Activated CD8-positive, alpha-beta T cell treated with anti-CD3 and anti-CD28 coated beads for 36 hours (primary cell): ENCODE measurements at regions of chr14 and their contacts with region 1.

Region 1: DNA sequence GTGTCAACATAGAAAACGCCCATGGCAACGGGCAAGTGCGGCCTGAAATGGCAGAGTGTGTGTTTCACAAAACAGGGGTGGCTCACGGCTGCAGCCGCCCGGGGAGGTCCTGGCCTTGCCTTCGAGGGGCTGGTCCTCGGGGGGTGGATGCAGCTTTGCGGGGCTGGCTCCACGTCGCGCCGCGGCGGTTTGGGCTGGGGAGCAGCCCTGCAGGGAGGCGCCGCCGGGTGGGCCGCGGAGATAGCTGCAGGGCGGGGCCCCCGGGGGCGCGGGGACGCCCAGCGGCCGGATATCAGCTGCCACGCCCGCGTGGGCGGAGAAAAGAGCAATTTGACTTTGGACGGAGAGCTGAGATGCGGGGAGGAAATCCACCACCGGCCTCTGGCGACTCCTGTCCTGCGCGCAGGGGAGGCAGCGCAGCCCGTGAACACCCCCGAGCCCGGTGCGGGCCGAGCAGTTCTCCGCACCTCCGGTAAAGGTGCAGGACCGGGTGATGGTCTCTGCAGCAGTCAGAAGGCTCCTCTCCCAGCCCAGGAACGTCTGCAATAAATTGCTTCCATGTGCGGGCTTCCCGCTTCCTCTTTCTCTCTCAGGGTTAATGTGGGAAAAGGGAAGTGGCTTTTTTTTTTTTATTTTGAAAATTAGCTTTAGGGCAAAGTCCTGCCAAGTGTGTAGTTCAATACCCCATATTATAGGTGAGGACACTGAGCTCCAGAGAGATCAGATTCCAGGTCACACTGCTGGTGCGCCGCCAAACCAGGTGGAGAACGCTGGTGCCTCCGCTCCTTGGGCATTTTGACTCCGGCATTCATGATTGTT is 110.5 kb downstream of the ARF6 start:
- DNase-seq: peak; percentile 92
- ATAC-seq: peak; percentile 10
- H3K4me3 Mint-ChIP-seq: peak overlapping the region; percentile 72
- H3K27ac Mint-ChIP-seq: peak overlapping the region; percentile 94
- H3K4me1 Mint-ChIP-seq: peaks cover 35% of the 10 kb centered on the region
- H3K27me3 Mint-ChIP-seq: no peaks in the 10 kb centered on the region
- CTCF ChIP-seq: no peak

Region 2: GRCh38 chr14:49774106-49774505 is 229.3 kb before region 1 on chr14:
- CTCF ChIA-PET with region 1: no interaction called
- POLR2A ChIA-PET with region 1: no interaction called
- intact Hi-C with region 1: no loop called
- DNase-seq: no peak
- ATAC-seq: no peak
- H3K4me3 Mint-ChIP-seq: no peak overlapping the region
- H3K27ac Mint-ChIP-seq: no peak overlapping the region
- H3K4me1 Mint-ChIP-seq: peaks cover 28% of the 10 kb centered on the region
- H3K27me3 Mint-ChIP-seq: no peaks in the 10 kb centered on the region
- CTCF ChIP-seq: no peak

Region 3: DNA sequence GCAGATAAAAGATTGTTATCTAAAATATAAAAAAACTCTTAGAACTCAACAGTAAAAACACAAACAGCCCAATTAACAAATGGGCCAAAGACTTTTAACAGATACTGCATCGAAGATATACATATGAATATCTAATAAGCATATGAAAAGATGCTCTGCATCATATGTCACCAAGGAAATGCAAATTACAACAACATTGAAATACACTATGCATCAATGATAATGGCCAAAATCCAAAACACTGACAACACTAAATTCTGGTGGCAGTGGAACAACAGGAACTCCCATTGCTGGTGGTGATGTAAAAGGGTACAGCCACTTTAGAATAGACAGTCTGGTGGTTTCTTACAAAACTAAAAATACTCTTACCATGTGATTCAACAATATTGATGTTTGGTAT is 194.6 kb before region 1 on chr14:
- CTCF ChIA-PET with region 1: no interaction called
- POLR2A ChIA-PET with region 1: no interaction called
- intact Hi-C with region 1: no loop called
- DNase-seq: no peak
- ATAC-seq: no peak
- H3K4me3 Mint-ChIP-seq: no peak overlapping the region
- H3K27ac Mint-ChIP-seq: peak overlapping the region; percentile 11
- H3K4me1 Mint-ChIP-seq: peaks cover 8% of the 10 kb centered on the region
- H3K27me3 Mint-ChIP-seq: no peaks in the 10 kb centered on the region
- CTCF ChIP-seq: no peak

Region 4: GRCh38 chr14:49892636-49893308 is 110.7 kb before region 1 on chr14 and contains the start of gene ARF6:
- CTCF ChIA-PET with region 1: interaction called, 5 read pairs
- POLR2A ChIA-PET with region 1: interaction called, 84 read pairs
- intact Hi-C with region 1: loop called (anchors 1 kb)
- DNase-seq: peak; percentile 98
- ATAC-seq: peak; percentile 80
- H3K4me3 Mint-ChIP-seq: peak within 1 kb of the TSS; percentile 88
- H3K27ac Mint-ChIP-seq: peak within 1 kb of the TSS; percentile 97
- H3K4me1 Mint-ChIP-seq: peaks cover 4% of the 10 kb centered on the region
- H3K27me3 Mint-ChIP-seq: no peaks in the 10 kb centered on the region
- CTCF ChIP-seq: no peak
- total RNA-seq, gene ARF6: 170 TPM

Region 5: GRCh38 chr14:49940808-49941421 is 62.5 kb before region 1 on chr14:
- CTCF ChIA-PET with region 1: no interaction called
- POLR2A ChIA-PET with region 1: interaction called, 10 read pairs
- intact Hi-C with region 1: no loop called
- DNase-seq: no peak
- ATAC-seq: no peak
- H3K4me3 Mint-ChIP-seq: no peak overlapping the region
- H3K27ac Mint-ChIP-seq: peak overlapping the region; percentile 78
- H3K4me1 Mint-ChIP-seq: peaks cover 52% of the 10 kb centered on the region
- H3K27me3 Mint-ChIP-seq: no peaks in the 10 kb centered on the region
- CTCF ChIP-seq: no peak

Region 6: GRCh38 chr14:49992901-49993335 is 10.5 kb before region 1 on chr14:
- CTCF ChIA-PET with region 1: interaction called, 7 read pairs
- POLR2A ChIA-PET with region 1: interaction called, 26 read pairs
- intact Hi-C with region 1: no loop called
- DNase-seq: peak; percentile 80
- ATAC-seq: peak; percentile 96
- H3K4me3 Mint-ChIP-seq: peak overlapping the region; percentile 56
- H3K27ac Mint-ChIP-seq: peak overlapping the region; percentile 81
- H3K4me1 Mint-ChIP-seq: peaks cover 26% of the 10 kb centered on the region
- H3K27me3 Mint-ChIP-seq: no peaks in the 10 kb centered on the region
- CTCF ChIP-seq: no peak

Region 7: DNA sequence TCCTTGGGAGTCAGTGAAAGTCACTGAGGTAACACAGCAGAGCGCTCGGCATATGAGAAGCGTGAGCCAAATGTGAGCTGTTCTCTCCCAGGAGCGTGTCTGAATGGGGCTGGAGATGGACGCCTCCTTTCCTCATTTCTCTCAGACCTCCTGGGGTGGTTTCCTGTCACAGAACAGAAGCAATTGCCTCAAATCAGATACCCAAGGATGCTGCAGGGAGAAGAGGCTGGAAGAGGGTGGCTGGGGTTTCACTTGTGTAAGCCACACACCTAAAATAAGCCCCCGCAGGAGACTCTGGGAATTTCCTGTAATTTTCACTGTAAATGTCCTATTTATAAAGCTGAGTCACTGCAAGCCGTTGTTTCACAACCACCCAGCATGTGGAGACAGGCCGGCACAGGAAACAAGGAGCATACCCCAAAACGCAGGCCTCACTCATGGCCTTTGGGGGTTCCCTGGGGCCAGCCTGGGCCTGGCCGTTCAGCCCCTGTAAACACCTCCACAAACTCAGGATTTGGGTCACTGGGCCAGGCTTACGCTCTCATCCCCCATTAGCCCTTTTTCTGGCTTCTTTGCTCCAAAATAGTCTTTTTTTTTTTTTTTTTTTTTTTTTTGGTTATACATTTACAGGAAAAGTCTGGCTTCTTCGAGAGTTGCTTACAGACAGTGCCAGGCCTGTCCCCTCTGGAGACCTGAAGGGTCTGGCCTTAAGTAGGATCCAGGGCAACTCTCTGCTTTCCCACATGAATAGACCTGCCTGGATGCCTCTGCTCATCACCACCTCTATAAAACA is 57.6 kb after region 1 on chr14:
- CTCF ChIA-PET with region 1: interaction called, 16 read pairs
- POLR2A ChIA-PET with region 1: interaction called, 78 read pairs
- intact Hi-C with region 1: loop called (anchors 1 kb)
- DNase-seq: peak; percentile 75
- ATAC-seq: peak; percentile 15
- H3K4me3 Mint-ChIP-seq: peak overlapping the region; percentile 83
- H3K27ac Mint-ChIP-seq: peak overlapping the region; percentile 99
- H3K4me1 Mint-ChIP-seq: peaks cover 71% of the 10 kb centered on the region
- H3K27me3 Mint-ChIP-seq: no peaks in the 10 kb centered on the region
- CTCF ChIP-seq: no peak

Region 8: DNA sequence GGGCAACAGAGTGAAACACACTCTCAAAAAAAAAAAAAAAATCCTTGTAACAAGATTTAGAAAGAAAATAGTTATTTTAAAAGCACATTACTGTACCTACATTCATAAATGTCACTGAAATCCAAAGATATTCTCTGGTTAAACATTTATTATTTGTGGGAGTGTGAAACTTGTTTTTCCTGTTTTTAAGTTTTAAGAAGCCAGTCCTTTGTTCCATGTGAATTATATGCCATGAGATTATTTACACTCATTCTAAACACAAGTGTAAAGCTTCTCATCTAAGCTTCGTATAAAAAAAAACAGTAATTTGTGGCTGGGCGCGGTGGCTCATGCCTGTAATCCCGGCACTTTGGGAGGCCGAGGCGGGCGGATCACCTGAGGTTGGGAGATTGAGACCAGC is 98.0 kb after region 1 on chr14:
- CTCF ChIA-PET with region 1: interaction called, 11 read pairs
- POLR2A ChIA-PET with region 1: interaction called, 13 read pairs
- intact Hi-C with region 1: loop called (anchors 5 kb)
- DNase-seq: no peak
- ATAC-seq: no peak
- H3K4me3 Mint-ChIP-seq: no peak overlapping the region
- H3K27ac Mint-ChIP-seq: no peak overlapping the region
- H3K4me1 Mint-ChIP-seq: peaks cover 66% of the 10 kb centered on the region
- H3K27me3 Mint-ChIP-seq: no peaks in the 10 kb centered on the region
- CTCF ChIP-seq: no peak